ENCODE measurements at regions of chr7 and their contacts with region 1.

Region 1: GRCh38 chr7:123865517-123866117 is 20.6 kb downstream of the HYAL4 start:
- DNase-seq: peak; percentile 59
- ATAC-seq: peak; percentile 94
- H3K4me3 ChIP-seq: no peak overlapping the region
- H3K27ac ChIP-seq: no peak overlapping the region
- H3K4me1 ChIP-seq: no peaks in the 10 kb centered on the region
- H3K27me3 ChIP-seq: peaks cover 6% of the 10 kb centered on the region; the same call in 1 of the 2 replicates
- CTCF ChIP-seq: peak; percentile 74

Region 2: DNA sequence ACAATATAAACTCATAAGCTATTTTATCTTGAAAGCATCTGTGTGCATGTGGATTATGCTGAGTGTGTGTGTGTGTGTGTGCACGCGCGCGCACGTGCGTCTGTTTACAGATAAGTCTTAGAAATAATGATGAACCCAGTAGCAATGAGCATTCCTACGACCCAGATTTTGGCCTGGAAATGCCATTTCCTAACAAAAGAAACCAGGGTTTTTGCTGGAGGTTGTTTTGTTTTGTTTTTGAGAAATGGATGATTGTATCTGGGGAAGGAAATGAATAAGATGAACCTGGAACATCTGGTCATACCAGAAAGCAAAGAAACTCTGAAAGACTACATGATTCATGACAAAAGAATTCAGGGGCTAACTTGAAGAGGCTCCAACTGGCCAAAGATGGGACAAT is 232.1 kb before region 1 on chr7:
- CTCF ChIA-PET with region 1: no interaction called
- POLR2A ChIA-PET with region 1: no interaction called
- in situ Hi-C with region 1: no loop called
- intact Hi-C with region 1: loop called (anchors 5 kb)
- DNase-seq: no peak
- ATAC-seq: no peak
- H3K4me3 ChIP-seq: no peak overlapping the region
- H3K27ac ChIP-seq: no peak overlapping the region
- H3K4me1 ChIP-seq: no peaks in the 10 kb centered on the region
- H3K27me3 ChIP-seq: 0 out of 2 replicates have a peak, but pooled peaks cover 6% of the 10 kb centered on the region
- CTCF ChIP-seq: no peak

Region 3: DNA sequence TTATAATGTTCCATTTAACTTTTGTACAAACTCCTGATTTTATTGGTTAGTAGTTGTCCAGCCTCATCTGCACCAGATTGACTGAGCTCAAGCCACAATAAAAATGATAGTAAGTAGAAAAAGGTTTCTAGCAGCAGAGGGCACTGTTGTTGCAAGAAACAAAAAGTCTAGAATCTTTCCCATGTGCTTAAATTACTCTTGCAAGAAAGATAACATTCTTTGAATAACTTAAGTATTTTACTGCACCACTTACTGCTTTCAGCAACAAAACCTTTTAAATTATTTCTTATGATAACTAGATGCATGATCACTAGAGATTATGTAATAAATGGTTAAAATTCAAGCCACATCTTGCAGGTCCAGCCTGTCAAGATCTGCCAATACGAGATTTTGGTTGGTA is 182.9 kb before region 1 on chr7:
- CTCF ChIA-PET with region 1: no interaction called
- POLR2A ChIA-PET with region 1: no interaction called
- in situ Hi-C with region 1: no loop called
- intact Hi-C with region 1: loop called (anchors 2 kb)
- DNase-seq: peak; percentile 35
- ATAC-seq: peak; percentile 80
- H3K4me3 ChIP-seq: no peak overlapping the region
- H3K27ac ChIP-seq: no peak overlapping the region
- H3K4me1 ChIP-seq: no peaks in the 10 kb centered on the region
- H3K27me3 ChIP-seq: no peaks in the 10 kb centered on the region
- CTCF ChIP-seq: peak; percentile 63; the same call in 1 of the 2 replicates

Region 4: GRCh38 chr7:123797673-123798527 is 67.7 kb before region 1 on chr7:
- CTCF ChIA-PET with region 1: interaction called, 8 read pairs
- POLR2A ChIA-PET with region 1: no interaction called
- in situ Hi-C with region 1: no loop called
- intact Hi-C with region 1: loop called (anchors 1 kb)
- DNase-seq: peak; percentile 62
- ATAC-seq: peak; percentile 71
- H3K4me3 ChIP-seq: no peak overlapping the region
- H3K27ac ChIP-seq: no peak overlapping the region
- H3K4me1 ChIP-seq: no peaks in the 10 kb centered on the region
- H3K27me3 ChIP-seq: no peaks in the 10 kb centered on the region
- CTCF ChIP-seq: peak; percentile 50; the same call in 1 of the 2 replicates